H1 (cell line): ENCODE measurements at regions of chr5 and their contacts with region 1.

Region 1: GRCh38 chr5:160165137-160166068 is 46.2 kb upstream of the PWWP2A start:
- DNase-seq: peak in 1 of 2 experiments; percentile 73
- H3K4me3 ChIP-seq: peak overlapping the region in 2 of 4 experiments; percentile 12 to 48; a peak in 2 of 8 replicates
- H3K27ac ChIP-seq: peak overlapping the region; percentile 90
- H3K4me1 ChIP-seq: peaks cover 20 to 37% (median 28%) of the 10 kb centered on the region in 4 experiments
- H3K27me3 ChIP-seq: no peaks in the 10 kb centered on the region
- CTCF ChIP-seq: no peak
- EP300 ChIP-seq: 0 out of 3 replicates have a peak, but pooled peaks of 1 of the 2 experiments have one; percentile 13
- POLR2A ChIP-seq: peak in 1 of 2 experiments; percentile 73; a peak in 1 of 3 replicates
- RAD21 ChIP-seq: no peak

Region 2: DNA sequence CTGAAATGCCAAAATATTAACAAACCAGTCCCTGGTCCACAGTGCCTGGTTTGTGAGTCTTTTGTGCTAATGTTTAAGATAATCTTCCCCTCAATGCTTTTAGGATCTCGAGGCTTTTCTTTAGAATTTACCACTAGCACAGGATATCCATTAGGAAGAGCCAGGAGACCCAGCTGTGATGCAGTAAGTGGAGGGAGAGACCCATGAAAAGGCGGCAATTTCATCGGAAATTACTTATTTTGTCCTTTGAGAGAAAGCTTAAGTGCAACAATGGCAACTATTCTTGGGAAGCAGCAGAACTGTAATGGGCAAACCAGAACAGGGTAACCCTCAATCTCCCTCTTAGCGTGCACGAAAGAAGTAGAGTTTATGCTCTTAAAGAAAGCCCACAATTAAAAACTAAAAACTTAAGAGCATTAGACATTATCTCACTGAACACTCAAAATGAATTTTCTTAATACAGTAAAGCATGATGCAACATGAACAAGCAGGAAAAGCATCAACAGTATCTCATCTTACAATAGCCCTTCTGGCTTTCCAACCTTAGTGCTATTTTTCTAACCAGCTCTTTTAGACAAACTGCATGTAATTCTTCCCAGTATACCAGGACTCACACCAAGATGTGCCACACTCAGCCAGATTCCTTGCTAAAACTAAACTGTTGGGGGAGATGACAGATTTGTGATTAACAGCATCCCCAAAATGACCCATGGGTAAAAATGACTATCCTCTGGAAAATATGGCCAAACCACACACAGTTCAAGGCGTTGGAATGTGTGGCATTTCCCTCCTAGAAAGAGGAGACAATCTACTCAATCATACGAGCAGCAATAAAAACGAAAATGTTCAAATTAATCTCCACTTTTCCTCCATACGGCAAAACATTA is 82.5 kb before region 1 on chr5:
- CTCF ChIA-PET with region 1: interaction called, 9 read pairs
- POLR2A ChIA-PET with region 1: interaction called, 16 read pairs
- DNase-seq: no peak
- H3K4me3 ChIP-seq: no peak overlapping the region
- H3K27ac ChIP-seq: 0 out of 2 replicates have a peak overlapping the region, but pooled peaks have one; percentile 11
- H3K4me1 ChIP-seq: peaks cover 0 to 10% (median 0%) of the 10 kb centered on the region in 4 experiments; a peak in 2 of 7 replicates
- H3K27me3 ChIP-seq: no peaks in the 10 kb centered on the region
- CTCF ChIP-seq: no peak
- EP300 ChIP-seq: no peak
- POLR2A ChIP-seq: no peak
- RAD21 ChIP-seq: no peak

Region 3: DNA sequence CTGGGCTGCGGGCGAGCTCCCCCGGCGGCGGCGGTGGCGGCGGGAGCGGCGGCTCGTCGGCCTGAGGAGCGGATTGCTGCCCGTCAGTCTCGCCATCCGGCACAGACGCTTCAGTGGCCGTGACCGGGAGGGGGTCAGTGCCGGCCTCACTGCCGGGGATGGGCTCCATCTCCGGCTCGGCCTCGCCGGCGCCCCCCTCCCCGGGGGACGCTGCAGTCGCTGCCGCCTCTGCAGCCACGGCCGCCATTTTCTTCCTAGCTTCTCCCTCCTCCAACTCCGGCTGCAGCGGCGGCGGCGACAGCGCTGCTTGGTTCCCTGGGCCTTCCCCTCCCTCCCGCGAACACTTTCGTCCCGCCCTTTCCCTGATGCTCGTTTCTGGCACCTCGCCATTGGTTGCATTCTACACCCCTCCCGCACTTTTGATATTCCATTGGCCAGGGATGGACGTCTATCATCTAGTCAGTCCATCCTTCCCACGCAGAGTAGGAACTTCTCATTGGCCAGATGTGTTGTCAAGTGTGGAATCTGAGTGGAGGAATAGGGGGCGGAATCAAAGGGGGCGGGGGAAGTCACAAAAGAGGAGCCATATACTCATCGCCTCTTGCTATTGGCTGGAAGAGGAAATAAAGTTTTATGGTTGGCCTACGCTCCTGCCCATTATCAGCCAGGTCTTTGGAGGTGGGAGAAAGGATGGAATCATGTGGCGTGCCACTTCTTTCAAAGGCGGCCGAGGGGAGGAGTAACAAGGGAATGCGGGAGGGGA is 46.1 kb before region 1 on chr5 and contains the start of gene PWWP2A:
- CTCF ChIA-PET with region 1: interaction called, 3 read pairs
- POLR2A ChIA-PET with region 1: interaction called, 12 read pairs
- DNase-seq: peak; percentile 90 to 99
- H3K4me3 ChIP-seq: peak within 1 kb of the TSS; percentile 85 to 97 (median 86)
- H3K27ac ChIP-seq: peak within 1 kb of the TSS; percentile 81
- H3K4me1 ChIP-seq: peaks cover 0 to 5% (median 0%) of the 10 kb centered on the region in 4 experiments; a peak in 2 of 7 replicates
- H3K27me3 ChIP-seq: no peaks in the 10 kb centered on the region
- CTCF ChIP-seq: no peak
- EP300 ChIP-seq: no peak
- POLR2A ChIP-seq: peak; percentile 71 to 84
- RAD21 ChIP-seq: no peak
- total RNA-seq, gene PWWP2A: 60.0 and 63.0 TPM in 2 replicates

Region 4: DNA sequence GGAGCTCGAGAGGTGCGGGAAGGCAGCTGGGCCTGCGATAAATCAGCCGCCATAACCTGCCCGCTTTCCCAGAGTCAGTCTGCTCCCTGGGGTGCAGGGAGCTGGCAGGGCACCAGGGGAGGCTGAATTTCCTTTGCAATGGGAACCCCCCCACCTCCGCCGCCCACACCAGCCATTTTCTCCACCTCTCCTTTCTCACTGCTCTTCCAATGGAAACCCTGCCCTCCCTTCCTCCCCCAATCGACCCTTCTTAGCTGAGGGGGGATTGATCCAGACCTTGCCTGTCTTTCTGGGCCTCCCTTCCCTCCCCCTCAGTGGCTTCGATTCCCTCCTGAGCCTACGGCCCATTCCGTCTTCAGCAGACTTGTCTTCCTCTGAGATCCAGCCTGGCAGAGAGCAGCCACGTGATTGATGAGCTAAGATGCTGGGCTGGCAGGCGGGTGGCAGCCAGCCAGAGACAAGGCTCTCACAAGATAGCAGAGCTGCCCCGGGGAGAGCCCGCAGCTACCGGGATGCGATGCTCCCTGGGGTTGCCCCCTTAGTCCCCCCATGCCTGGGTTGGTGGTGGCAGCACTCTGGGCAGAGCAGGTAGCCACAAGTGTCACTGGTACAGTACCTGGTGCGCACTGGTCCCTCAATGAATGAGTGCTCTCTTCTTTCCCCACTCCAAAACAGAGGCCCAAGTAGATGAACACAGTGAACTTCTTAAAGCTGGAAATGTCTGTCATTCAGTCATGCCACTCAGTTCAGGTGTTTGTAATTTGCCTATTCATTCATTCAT is 10.2 kb after region 1 on chr5:
- CTCF ChIA-PET with region 1: interaction called, 29 read pairs
- POLR2A ChIA-PET with region 1: interaction called, 50 read pairs
- DNase-seq: no peak
- H3K4me3 ChIP-seq: no peak overlapping the region
- H3K27ac ChIP-seq: no peak overlapping the region
- H3K4me1 ChIP-seq: peaks cover 6 to 15% (median 7%) of the 10 kb centered on the region in 4 experiments; a peak in 6 of 7 replicates
- H3K27me3 ChIP-seq: no peaks in the 10 kb centered on the region
- CTCF ChIP-seq: no peak
- EP300 ChIP-seq: no peak
- POLR2A ChIP-seq: no peak
- RAD21 ChIP-seq: no peak

Region 5: DNA sequence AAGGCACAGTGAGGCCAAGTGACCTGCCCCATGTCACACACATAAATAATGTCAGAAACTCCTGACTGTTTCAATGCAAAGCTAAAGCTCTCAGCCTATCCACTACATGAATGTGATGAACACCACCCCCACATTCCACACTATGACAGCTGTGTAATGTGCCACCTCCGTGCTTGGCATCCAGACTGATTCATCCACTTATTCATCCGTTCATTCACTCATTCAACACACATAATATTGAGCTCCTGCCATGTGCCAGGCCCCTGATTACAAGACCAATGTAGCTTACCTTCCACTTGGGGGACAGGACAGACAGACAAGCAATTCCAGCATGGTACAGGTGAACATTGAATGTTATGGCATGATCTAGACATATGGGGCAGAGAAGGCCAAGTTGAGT is 17.7 kb after region 1 on chr5:
- CTCF ChIA-PET with region 1: interaction called, 29 read pairs
- POLR2A ChIA-PET with region 1: interaction called, 72 read pairs
- DNase-seq: no peak
- H3K4me3 ChIP-seq: no peak overlapping the region
- H3K27ac ChIP-seq: no peak overlapping the region
- H3K4me1 ChIP-seq: peaks cover 0 to 8% (median 3%) of the 10 kb centered on the region in 4 experiments; a peak in 5 of 7 replicates
- H3K27me3 ChIP-seq: no peaks in the 10 kb centered on the region
- CTCF ChIP-seq: no peak
- EP300 ChIP-seq: no peak
- POLR2A ChIP-seq: no peak
- RAD21 ChIP-seq: no peak

Region 6: GRCh38 chr5:160188142-160189015 is 23.0 kb after region 1 on chr5:
- CTCF ChIA-PET with region 1: interaction called, 29 read pairs
- POLR2A ChIA-PET with region 1: interaction called, 72 read pairs
- DNase-seq: peak in 1 of 2 experiments; percentile 86
- H3K4me3 ChIP-seq: peak overlapping the region; percentile 27 to 53 (median 31); a peak in 6 of 8 replicates
- H3K27ac ChIP-seq: peak overlapping the region; percentile 81
- H3K4me1 ChIP-seq: peaks cover 0 to 7% (median 3%) of the 10 kb centered on the region in 4 experiments; a peak in 6 of 7 replicates
- H3K27me3 ChIP-seq: no peaks in the 10 kb centered on the region
- CTCF ChIP-seq: no peak
- EP300 ChIP-seq: peak in 1 of 2 experiments; percentile 8; a peak in 1 of 3 replicates
- POLR2A ChIP-seq: peak; percentile 39 to 71
- RAD21 ChIP-seq: peak; percentile 7 to 26; a peak in 1 of 4 replicates